Activated CD4-positive, alpha-beta memory T cell treated with anti-CD3 and anti-CD28 coated beads for 36 hours (primary cell): ENCODE measurements at regions of chr1 and their contacts with region 1.

Region 1: GRCh38 chr1:175373786-175374623 is 181.4 kb upstream of the KIAA0040 start:
- DNase-seq: peak; percentile 37
- H3K4me3 Mint-ChIP-seq: no peak overlapping the region
- H3K27ac Mint-ChIP-seq: no peak overlapping the region
- H3K4me1 Mint-ChIP-seq: no peaks in the 10 kb centered on the region
- H3K27me3 Mint-ChIP-seq: peaks cover 10% of the 10 kb centered on the region

Region 2: DNA sequence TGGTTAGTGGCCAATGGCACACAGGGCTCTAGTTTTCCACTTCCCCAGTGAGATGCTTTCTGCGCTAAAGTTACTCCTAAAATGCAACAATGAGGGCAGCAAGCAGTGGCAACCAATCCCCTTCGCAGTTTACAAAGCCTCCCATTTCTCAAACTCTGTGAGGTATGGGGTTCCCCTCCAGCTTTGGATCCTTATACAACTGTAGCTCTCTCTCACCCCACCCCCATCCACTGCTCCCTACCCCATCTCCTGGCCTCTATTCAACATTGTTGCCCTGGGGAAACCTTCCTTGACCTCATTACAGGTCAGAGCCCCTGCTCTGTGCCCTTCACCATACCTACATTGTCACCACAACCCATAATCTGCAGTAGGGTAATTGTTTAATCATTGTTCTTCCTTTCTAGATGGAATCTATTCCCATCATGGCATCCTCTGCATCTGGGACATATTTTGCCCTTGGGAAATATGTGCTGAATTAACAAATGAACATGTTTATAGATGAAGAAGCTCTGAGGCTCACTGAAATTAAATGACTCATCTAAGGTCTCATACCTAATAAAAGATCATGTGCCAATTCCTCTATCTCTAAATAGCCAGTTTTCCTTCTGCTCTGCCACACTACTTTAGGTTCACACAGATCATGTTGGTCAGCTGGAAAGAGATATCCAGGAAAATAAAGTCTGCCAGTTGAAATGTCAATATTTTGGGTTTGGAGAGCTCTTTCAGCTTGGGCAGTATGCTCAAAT is 194.0 kb before region 1 on chr1:
- CTCF ChIA-PET with region 1: no interaction called
- POLR2A ChIA-PET with region 1: no interaction called
- intact Hi-C with region 1: no loop called
- DNase-seq: no peak
- H3K4me3 Mint-ChIP-seq: no peak overlapping the region
- H3K27ac Mint-ChIP-seq: no peak overlapping the region
- H3K4me1 Mint-ChIP-seq: peaks cover 63% of the 10 kb centered on the region
- H3K27me3 Mint-ChIP-seq: no peaks in the 10 kb centered on the region

Region 3: DNA sequence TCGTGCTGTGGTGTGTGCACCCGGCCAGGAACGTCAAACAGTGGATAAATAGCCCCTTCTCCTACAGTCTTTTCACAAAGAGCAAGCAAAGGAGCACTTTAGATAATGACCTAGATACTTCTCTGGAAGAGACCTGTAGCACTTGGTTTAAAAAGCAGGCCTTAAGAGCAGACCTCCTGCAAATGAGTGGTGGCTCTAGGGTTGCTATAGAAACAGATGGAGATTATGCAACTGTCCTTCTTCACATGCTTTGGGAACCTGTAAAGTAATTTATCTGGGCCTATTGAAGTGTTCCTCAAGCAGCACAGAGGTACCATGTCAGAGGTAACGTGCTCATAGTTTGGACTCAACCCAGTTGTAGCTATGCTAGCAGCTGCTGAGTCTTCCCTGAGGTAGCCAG is 26.8 kb after region 1 on chr1:
- CTCF ChIA-PET with region 1: no interaction called
- POLR2A ChIA-PET with region 1: no interaction called
- intact Hi-C with region 1: no loop called
- DNase-seq: no peak
- H3K4me3 Mint-ChIP-seq: no peak overlapping the region
- H3K27ac Mint-ChIP-seq: no peak overlapping the region
- H3K4me1 Mint-ChIP-seq: no peaks in the 10 kb centered on the region
- H3K27me3 Mint-ChIP-seq: peaks cover 13% of the 10 kb centered on the region

Region 4: GRCh38 chr1:175742790-175743459 is 368.9 kb after region 1 on chr1:
- CTCF ChIA-PET with region 1: no interaction called
- POLR2A ChIA-PET with region 1: no interaction called
- intact Hi-C with region 1: loop called (anchors 10 kb)
- DNase-seq: no peak
- H3K4me3 Mint-ChIP-seq: no peak overlapping the region
- H3K27ac Mint-ChIP-seq: no peak overlapping the region
- H3K4me1 Mint-ChIP-seq: peaks cover 2% of the 10 kb centered on the region
- H3K27me3 Mint-ChIP-seq: peaks cover 21% of the 10 kb centered on the region

Region 5: DNA sequence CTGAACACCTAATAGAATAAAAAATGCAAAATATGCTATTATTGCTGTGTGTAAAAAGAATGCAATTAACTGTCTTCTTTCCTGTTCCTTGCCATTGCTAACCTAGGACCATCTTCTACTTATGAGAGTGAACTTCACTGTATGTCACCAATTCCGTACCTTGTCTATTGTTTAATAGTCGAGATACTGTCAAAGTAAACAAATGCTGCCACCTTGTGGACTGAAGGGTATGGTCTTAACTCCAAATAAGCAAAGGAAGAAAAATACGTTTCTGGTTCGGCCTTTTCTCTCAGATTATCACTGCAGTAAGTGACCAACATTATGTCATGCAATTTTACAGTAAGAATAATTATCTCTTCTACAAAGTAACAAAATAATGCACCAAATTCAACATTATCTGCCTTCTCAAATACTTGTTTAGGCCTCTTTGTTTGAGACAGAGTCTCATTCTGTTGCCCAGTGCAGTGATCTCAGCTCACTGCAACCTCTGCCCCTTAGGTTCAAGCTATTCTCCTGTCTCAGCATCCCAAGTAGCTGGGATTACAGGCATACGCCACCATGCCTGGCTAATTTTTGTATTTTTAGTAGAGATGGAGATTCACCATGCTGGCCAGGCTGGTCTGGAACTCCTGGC is 699.6 kb after region 1 on chr1:
- CTCF ChIA-PET with region 1: no interaction called
- POLR2A ChIA-PET with region 1: no interaction called
- intact Hi-C with region 1: loop called (anchors 10 kb)
- DNase-seq: no peak
- H3K4me3 Mint-ChIP-seq: no peak overlapping the region
- H3K27ac Mint-ChIP-seq: no peak overlapping the region
- H3K4me1 Mint-ChIP-seq: peaks cover 3% of the 10 kb centered on the region
- H3K27me3 Mint-ChIP-seq: no peaks in the 10 kb centered on the region